Stomach (tissue), 19 donors: ENCODE measurements at regions of chr17 and their contacts with region 1.

Region 1: GRCh38 chr17:29771551-29771950 is 148.8 kb upstream of the CORO6 start:
- DNase-seq: no peak
- H3K4me3 ChIP-seq: no peak overlapping the region
- H3K27ac ChIP-seq: no peak overlapping the region
- H3K4me1 ChIP-seq: no peaks in the 10 kb centered on the region
- H3K27me3 ChIP-seq: no peaks in the 10 kb centered on the region
- CTCF ChIP-seq: no peak
- EP300 ChIP-seq: no peak
- POLR2A ChIP-seq: no peak

Region 2: GRCh38 chr17:29645515-29646051 is 126.0 kb before region 1 on chr17:
- intact Hi-C with region 1: loop called (anchors 10 kb)
- DNase-seq: peak; percentile 42 to 63
- H3K4me3 ChIP-seq: no peak overlapping the region
- H3K27ac ChIP-seq: peak overlapping the region; percentile 50 to 79 (median 73)
- H3K4me1 ChIP-seq: peaks cover 6 to 62% (median 31%) of the 10 kb centered on the region in 4 donors
- H3K27me3 ChIP-seq: no peaks in the 10 kb centered on the region
- CTCF ChIP-seq: no peak
- EP300 ChIP-seq: no peak
- POLR2A ChIP-seq: no peak

Region 3: GRCh38 chr17:29687596-29687995 is 84.0 kb before region 1 on chr17:
- intact Hi-C with region 1: no loop called
- DNase-seq: peak in 1 of 2 donors; percentile 44
- H3K4me3 ChIP-seq: no peak overlapping the region
- H3K27ac ChIP-seq: no peak overlapping the region
- H3K4me1 ChIP-seq: peaks cover 0 to 41% (median 21%) of the 10 kb centered on the region in 4 donors
- H3K27me3 ChIP-seq: no peaks in the 10 kb centered on the region
- CTCF ChIP-seq: no peak
- EP300 ChIP-seq: no peak
- POLR2A ChIP-seq: no peak